ENCODE measurements at regions of chr14 and their contacts with region 1.

Region 1: GRCh38 chr14:104677512-104678332 is 11.7 kb upstream of the INF2 start:
- DNase-seq: peak; percentile 81 to 84 (median 84)
- ATAC-seq: peak; percentile 87
- H3K4me3 ChIP-seq: peak overlapping the region; percentile 35
- H3K27ac ChIP-seq: peak overlapping the region; percentile 94
- H3K4me1 ChIP-seq: peaks cover 34 to 69% of the 10 kb centered on the region in 2 experiments
- H3K27me3 ChIP-seq: no peaks in the 10 kb centered on the region
- CTCF ChIP-seq: no peak
- EP300 ChIP-seq: no peak
- POLR2A ChIP-seq: peak; percentile 80
- RAD21 ChIP-seq: no peak

Region 2: GRCh38 chr14:104687601-104688504 is 10.1 kb after region 1 on chr14:
- CTCF ChIA-PET with region 1: no interaction called
- POLR2A ChIA-PET with region 1: interaction called, 12 read pairs
- in situ Hi-C with region 1: no loop called
- intact Hi-C with region 1: no loop called
- DNase-seq: no peak
- ATAC-seq: 0 out of 3 replicates have a peak, but pooled peaks have one; percentile 3
- H3K4me3 ChIP-seq: no peak overlapping the region
- H3K27ac ChIP-seq: no peak overlapping the region
- H3K4me1 ChIP-seq: peaks cover 5 to 60% of the 10 kb centered on the region in 2 experiments; a peak in 4 of 5 replicates
- H3K27me3 ChIP-seq: no peaks in the 10 kb centered on the region
- CTCF ChIP-seq: no peak
- EP300 ChIP-seq: no peak
- POLR2A ChIP-seq: no peak
- RAD21 ChIP-seq: no peak

Measured in K562 (cell line).